Adrenal gland (tissue), 19 donors: ENCODE measurements at regions of chr6 and their contacts with region 1.

Region 1: DNA sequence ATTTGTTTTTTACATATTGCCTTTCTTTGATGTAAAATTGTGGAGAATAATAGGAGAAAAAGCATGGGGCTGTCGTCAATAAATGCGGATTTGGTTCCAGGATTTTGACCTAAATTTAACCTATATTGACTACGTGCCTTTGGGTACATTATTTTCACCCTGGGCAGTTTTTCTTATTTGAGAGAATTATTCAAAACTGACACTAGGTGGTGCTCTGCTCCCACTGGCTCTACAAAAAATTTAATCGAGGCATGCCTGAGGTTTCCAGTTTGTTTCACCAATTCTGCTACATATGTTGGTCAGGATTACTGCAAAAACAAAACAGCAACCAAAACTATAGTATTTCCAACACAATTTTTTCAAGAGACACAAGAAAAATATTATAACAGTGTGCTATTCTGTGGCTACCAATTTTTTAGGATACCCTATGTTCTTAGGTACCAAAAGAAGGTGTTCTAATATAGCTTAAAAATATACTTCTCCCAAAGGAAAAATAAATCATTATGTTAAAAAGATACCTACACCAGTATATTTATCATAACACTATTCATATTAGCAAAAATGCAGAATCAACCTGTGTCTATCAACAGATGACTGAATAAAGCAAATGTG is 48.6 kb upstream of the FABP7 start:
- DNase-seq: peak in 2 of 7 donors; percentile 4 to 33
- H3K4me3 ChIP-seq: no peak overlapping the region
- H3K27ac ChIP-seq: no peak overlapping the region
- H3K4me1 ChIP-seq: no peaks in the 10 kb centered on the region
- H3K27me3 ChIP-seq: no peaks in the 10 kb centered on the region
- CTCF ChIP-seq: peak; percentile 63 to 90 (median 77)
- POLR2A ChIP-seq: no peak

Region 2: GRCh38 chr6:122839477-122839876 is 108.6 kb after region 1 on chr6:
- intact Hi-C with region 1: loop called in 1 of 2 experiments (anchors 2 kb)
- DNase-seq: peak; percentile 44 to 83 (median 68)
- H3K4me3 ChIP-seq: no peak overlapping the region
- H3K27ac ChIP-seq: no peak overlapping the region
- H3K4me1 ChIP-seq: no peaks in the 10 kb centered on the region
- H3K27me3 ChIP-seq: no peaks in the 10 kb centered on the region
- CTCF ChIP-seq: peak; percentile 63 to 84 (median 68)
- POLR2A ChIP-seq: no peak

Region 3: GRCh38 chr6:122853259-122853995 is 122.5 kb after region 1 on chr6:
- intact Hi-C with region 1: loop called in 1 of 2 experiments (anchors 5 kb)
- DNase-seq: no peak
- H3K4me3 ChIP-seq: no peak overlapping the region
- H3K27ac ChIP-seq: no peak overlapping the region
- H3K4me1 ChIP-seq: no peaks in the 10 kb centered on the region
- H3K27me3 ChIP-seq: no peaks in the 10 kb centered on the region
- CTCF ChIP-seq: no peak
- POLR2A ChIP-seq: no peak

Region 4: DNA sequence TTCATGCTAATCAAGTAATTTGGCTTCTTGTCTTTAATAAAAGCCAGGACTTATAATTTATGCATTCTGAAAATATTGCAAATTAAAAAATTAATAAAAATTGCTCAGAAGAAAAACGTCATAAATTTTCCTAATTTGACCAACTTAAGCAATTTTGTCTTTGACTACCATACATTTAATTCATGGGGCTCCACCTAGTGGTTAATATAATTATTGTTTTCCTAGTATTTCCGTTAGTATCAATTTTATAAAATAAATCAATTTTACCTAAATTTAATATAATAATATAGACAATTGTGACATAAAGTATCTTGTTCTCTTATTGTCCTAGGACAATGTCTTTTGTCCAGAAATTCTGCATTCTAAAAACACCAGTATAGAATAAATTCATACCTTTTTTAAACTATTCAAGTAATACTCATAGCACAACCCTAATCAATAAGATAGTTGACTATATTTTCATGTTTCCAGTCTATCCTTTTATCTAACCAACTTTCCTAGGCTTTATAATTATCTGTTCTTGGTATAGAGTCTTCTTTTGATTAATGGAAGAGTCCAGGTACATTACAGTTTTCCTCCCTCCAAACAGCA is 585.9 kb after region 1 on chr6:
- intact Hi-C with region 1: loop called in 1 of 2 experiments (anchors 5 kb)
- DNase-seq: no peak
- H3K4me3 ChIP-seq: no peak overlapping the region
- H3K27ac ChIP-seq: no peak overlapping the region
- H3K4me1 ChIP-seq: no peaks in the 10 kb centered on the region
- H3K27me3 ChIP-seq: no peaks in the 10 kb centered on the region
- CTCF ChIP-seq: peak; percentile 21 to 69 (median 54)
- POLR2A ChIP-seq: no peak